ENCODE measurements at regions of chr6 and their contacts with region 1.

Region 1: GRCh38 chr6:35731736-35732532 is 4.9 kb upstream of the ARMC12 start:
- DNase-seq: peak; percentile 91
- H3K4me3 ChIP-seq: peak overlapping the region; percentile 76 to 89
- H3K27ac ChIP-seq: peak overlapping the region; percentile 92 to 98
- H3K4me1 ChIP-seq: peaks cover 5 to 34% of the 10 kb centered on the region in 2 experiments; a peak in 2 of 4 replicates
- H3K27me3 ChIP-seq: no peaks in the 10 kb centered on the region
- CTCF ChIP-seq: no peak
- EP300 ChIP-seq: peak in 1 of 2 experiments; percentile 58; a peak in 2 of 4 replicates
- RAD21 ChIP-seq: peak; percentile 27

Region 2: DNA sequence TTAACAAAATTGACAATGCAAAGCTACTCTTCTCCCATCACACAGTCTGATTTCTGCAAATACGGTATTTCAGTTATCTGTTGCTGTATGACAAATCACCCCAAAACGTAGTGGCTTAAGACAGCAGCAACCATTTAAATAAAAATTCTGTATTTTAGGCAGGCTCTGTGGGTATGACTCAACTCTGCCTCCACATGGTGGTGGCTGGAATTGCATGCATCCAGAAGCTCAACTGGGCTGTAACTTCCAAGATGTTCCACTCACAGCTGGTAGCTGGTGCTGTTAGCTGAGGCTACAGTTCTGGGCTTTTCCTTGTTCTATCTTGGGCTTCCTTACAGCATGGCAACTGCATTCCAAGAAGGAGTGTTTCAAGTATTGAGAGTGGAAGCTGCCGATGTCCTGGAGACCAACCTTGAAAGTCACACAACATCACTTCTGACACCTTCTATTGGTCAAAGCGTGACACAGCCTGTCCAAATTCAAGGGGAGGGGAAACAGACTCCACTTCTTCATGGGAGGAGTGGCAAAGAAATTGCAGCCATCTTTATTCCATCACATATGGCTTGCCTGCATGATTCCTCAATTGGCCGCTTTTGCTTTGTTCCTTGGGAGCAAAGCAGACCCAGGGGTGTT is 179.5 kb before region 1 on chr6:
- CTCF ChIA-PET with region 1: interaction called, 13 read pairs
- POLR2A ChIA-PET with region 1: no interaction called
- DNase-seq: peak; percentile 40
- H3K4me3 ChIP-seq: no peak overlapping the region
- H3K27ac ChIP-seq: no peak overlapping the region
- H3K4me1 ChIP-seq: no peaks in the 10 kb centered on the region; a peak in 1 of 4 replicates
- H3K27me3 ChIP-seq: no peaks in the 10 kb centered on the region
- CTCF ChIP-seq: peak; percentile 66
- EP300 ChIP-seq: no peak
- RAD21 ChIP-seq: peak; percentile 75

Region 3: DNA sequence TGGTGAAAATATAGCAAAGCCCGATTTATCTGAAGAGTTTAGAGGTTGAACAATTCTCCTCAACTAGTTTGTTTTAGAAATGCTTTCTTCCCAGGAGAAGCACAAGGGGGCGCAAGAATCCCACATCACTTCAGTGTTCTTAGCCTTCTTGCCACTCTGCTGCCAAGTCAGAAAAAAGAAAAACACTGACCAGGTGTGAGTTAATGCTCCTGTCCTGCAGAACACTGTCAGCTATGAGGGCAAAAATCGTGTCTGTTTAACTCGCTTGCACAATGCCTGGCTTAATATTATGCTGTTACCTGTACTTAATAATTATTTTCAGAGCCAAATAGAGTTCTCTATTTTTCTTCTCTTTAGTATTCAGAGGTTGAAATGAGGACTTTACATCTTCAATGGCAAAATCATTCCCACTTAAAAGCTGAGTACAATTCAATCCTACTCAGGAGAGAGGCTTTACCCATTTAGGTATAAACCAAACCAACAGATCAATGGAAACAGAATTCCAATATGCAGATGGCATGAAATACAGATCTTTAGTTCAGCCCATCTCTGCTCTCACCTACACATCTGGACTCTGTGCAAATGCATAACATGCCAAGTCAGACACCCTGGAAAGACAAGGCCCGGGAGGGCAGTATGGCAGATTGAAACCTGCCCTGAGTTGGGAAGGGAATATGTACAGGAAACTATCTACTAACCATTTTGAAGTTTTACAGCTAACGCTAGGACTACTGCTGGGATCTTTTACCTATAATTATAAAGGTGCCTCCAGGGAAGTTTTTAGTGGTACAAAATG is 147.8 kb before region 1 on chr6:
- CTCF ChIA-PET with region 1: interaction called, 271 read pairs
- POLR2A ChIA-PET with region 1: no interaction called
- DNase-seq: peak; percentile 52
- H3K4me3 ChIP-seq: no peak overlapping the region
- H3K27ac ChIP-seq: peak overlapping the region in 1 of 2 experiments; percentile 55; a peak in 2 of 4 replicates
- H3K4me1 ChIP-seq: peaks cover 4 to 13% of the 10 kb centered on the region in 2 experiments; a peak in 2 of 4 replicates
- H3K27me3 ChIP-seq: no peaks in the 10 kb centered on the region
- CTCF ChIP-seq: peak; percentile 91
- EP300 ChIP-seq: no peak
- RAD21 ChIP-seq: peak; percentile 97

Region 4: GRCh38 chr6:35634316-35634715 is 97.6 kb before region 1 on chr6:
- CTCF ChIA-PET with region 1: interaction called, 14 read pairs
- POLR2A ChIA-PET with region 1: no interaction called
- DNase-seq: no peak
- H3K4me3 ChIP-seq: no peak overlapping the region
- H3K27ac ChIP-seq: no peak overlapping the region
- H3K4me1 ChIP-seq: no peaks in the 10 kb centered on the region; a peak in 1 of 4 replicates
- H3K27me3 ChIP-seq: no peaks in the 10 kb centered on the region
- CTCF ChIP-seq: no peak
- EP300 ChIP-seq: no peak
- RAD21 ChIP-seq: no peak

Region 5: GRCh38 chr6:35757456-35758123 is 25.7 kb after region 1 on chr6:
- CTCF ChIA-PET with region 1: interaction called, 13 read pairs
- POLR2A ChIA-PET with region 1: no interaction called
- DNase-seq: no peak
- H3K4me3 ChIP-seq: no peak overlapping the region
- H3K27ac ChIP-seq: no peak overlapping the region
- H3K4me1 ChIP-seq: no peaks in the 10 kb centered on the region
- H3K27me3 ChIP-seq: no peaks in the 10 kb centered on the region; the same call in 1 of the 2 replicates
- CTCF ChIP-seq: peak; percentile 28; the same call in 1 of the 2 replicates
- EP300 ChIP-seq: no peak
- RAD21 ChIP-seq: peak; percentile 32

Measured in SK-N-SH (cell line).